Ovary (tissue), 10 donors: ENCODE measurements at regions of chr10 and their contacts with region 1.

Region 1: GRCh38 chr10:31947144-31947926 is 18.7 kb upstream of the ARHGAP12 start:
- DNase-seq: peak in 2 of 5 donors; percentile 15 to 52
- H3K4me3 ChIP-seq: no peak overlapping the region
- H3K27ac ChIP-seq: peak overlapping the region in 1 of 2 donors; percentile 2
- H3K4me1 ChIP-seq: peaks cover 5% of the 10 kb centered on the region
- H3K27me3 ChIP-seq: no peaks in the 10 kb centered on the region
- CTCF ChIP-seq: peak; percentile 43 to 52 (median 48)
- EP300 ChIP-seq: no peak
- POLR2A ChIP-seq: no peak

Region 2: DNA sequence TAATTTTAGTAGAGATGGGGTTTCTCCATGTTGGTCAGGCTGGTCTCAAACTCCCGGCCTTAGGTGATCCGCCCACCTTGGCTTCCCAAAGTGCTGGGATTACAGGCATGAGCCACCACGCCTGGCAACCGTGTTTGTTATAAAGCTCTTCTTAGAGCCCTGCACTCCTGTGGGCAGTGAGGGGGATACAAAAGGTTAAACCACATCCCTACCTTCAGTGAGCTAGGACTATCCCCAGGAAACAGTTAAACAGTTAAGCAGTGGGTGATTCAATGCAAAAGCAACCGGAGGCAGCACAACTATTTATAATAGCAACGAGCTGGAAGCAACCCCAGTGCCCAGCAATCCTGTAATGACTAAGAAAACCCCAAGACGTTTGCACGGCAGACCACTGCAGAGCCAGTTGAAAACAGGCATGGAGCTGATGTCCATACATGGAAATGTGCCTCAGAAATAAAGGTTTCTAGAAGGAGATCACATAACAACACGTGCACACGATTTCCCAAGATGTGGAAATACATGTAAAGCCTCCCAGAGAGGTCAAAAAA is 1210.6 kb before region 1 on chr10:
- intact Hi-C with region 1: loop called in 1 of 4 experiments (anchors 5 kb)
- DNase-seq: no peak
- H3K4me3 ChIP-seq: no peak overlapping the region
- H3K27ac ChIP-seq: no peak overlapping the region
- H3K4me1 ChIP-seq: no peaks in the 10 kb centered on the region
- H3K27me3 ChIP-seq: no peaks in the 10 kb centered on the region
- CTCF ChIP-seq: no peak
- EP300 ChIP-seq: no peak
- POLR2A ChIP-seq: no peak

Region 3: GRCh38 chr10:31864834-31865518 is 82.4 kb before region 1 on chr10:
- intact Hi-C with region 1: loop called in 2 of 4 experiments (anchors 10 kb)
- DNase-seq: no peak
- H3K4me3 ChIP-seq: no peak overlapping the region
- H3K27ac ChIP-seq: no peak overlapping the region
- H3K4me1 ChIP-seq: peaks cover 2% of the 10 kb centered on the region
- H3K27me3 ChIP-seq: no peaks in the 10 kb centered on the region
- CTCF ChIP-seq: no peak
- EP300 ChIP-seq: no peak
- POLR2A ChIP-seq: no peak

Region 4: DNA sequence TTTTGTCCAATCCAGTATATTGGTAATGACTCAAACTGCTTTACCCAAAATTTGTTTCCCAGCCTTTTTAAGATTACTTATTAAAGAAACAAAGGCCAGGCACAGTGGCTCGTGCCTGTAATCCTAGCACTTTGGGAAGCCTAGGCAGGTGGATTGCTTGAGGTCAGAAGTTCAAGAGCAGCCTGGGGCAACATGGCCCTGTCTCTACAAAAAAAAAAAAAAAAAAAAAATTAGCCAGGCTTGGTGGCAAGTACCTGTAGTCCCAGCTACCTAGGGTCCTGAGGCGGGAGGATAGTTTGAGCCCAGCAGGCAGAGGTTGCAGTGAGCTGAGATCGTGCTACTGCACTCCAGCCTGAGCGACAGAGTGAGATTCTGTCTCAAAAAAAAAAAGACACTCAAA is 11.7 kb before region 1 on chr10:
- intact Hi-C with region 1: loop called in 1 of 4 experiments (anchors 1 kb)
- DNase-seq: no peak
- H3K4me3 ChIP-seq: no peak overlapping the region
- H3K27ac ChIP-seq: no peak overlapping the region
- H3K4me1 ChIP-seq: no peaks in the 10 kb centered on the region
- H3K27me3 ChIP-seq: no peaks in the 10 kb centered on the region
- CTCF ChIP-seq: no peak
- EP300 ChIP-seq: no peak
- POLR2A ChIP-seq: no peak

Region 5: DNA sequence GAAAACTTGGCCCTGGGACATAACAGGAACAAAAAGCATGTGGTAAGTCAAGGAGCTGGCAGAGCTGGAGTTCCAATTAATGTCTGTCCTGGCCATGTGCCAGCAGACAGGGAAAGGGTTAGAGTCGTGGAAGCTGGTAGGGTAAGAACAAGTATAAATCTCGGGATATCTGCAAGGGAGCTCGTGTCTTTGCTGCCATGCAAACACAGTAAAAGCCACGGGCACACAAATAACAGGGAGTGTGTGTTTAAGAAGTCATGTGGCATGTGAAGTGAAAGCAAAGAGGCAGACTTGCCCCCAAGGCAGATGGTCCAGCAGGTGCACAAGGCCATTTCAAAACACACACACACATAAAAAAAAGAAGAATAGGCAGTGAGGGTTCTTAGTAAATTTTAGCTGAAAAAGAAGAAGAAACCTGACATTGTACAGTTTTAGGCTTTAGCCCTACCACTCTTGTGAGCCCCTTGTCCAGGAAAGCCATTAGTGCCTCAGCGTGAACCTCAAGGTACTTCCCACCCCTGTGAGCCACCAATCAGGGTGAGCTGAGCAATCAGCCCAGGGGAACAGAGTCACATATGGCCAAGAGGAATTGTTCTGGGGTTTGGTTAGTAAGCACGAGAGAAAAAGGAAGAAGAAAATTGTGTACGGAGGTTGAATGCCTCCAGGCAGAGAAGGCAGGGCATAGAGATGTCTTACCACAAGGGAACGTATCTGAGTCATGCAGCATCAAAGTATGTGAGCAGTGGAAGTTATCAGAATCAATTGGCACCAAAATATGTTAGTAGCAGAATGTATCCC is 14.1 kb after region 1 on chr10:
- intact Hi-C with region 1: no loop called
- DNase-seq: no peak
- H3K4me3 ChIP-seq: no peak overlapping the region
- H3K27ac ChIP-seq: no peak overlapping the region
- H3K4me1 ChIP-seq: peaks cover 1% of the 10 kb centered on the region
- H3K27me3 ChIP-seq: no peaks in the 10 kb centered on the region
- CTCF ChIP-seq: no peak
- EP300 ChIP-seq: no peak
- POLR2A ChIP-seq: no peak

Region 6: DNA sequence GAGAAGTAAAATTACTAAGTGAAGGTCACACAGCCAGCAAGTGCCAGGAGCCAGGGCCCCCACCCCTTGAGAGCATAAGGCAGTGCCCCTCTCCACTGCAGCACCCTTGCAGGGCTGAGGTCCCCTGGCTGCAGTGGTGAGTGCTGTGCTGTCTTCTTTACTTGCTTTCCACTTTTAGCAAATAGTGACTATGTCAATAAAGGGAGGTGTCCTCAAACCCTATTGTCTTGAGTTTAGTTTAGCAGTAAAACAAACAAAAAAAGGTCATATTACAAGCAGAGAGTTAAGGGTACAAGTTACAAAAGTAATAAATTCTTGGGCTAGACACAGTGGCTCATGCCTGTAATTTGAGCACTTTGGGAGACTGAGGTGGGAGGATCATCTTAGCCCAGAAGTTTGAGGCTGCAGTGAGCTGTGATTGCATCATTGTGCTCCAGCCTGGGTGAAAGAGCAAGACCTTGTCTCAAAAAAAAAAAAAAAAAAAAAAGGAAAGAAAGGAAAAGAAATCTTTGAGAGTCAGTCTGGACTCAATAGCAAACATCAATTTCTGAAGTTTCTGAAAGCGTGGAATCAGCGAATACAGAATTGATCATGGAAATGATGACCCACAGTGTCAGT is 147.9 kb after region 1 on chr10:
- intact Hi-C with region 1: no loop called
- DNase-seq: no peak
- H3K4me3 ChIP-seq: no peak overlapping the region
- H3K27ac ChIP-seq: no peak overlapping the region
- H3K4me1 ChIP-seq: no peaks in the 10 kb centered on the region
- H3K27me3 ChIP-seq: no peaks in the 10 kb centered on the region
- CTCF ChIP-seq: no peak
- EP300 ChIP-seq: no peak
- POLR2A ChIP-seq: no peak

Region 7: DNA sequence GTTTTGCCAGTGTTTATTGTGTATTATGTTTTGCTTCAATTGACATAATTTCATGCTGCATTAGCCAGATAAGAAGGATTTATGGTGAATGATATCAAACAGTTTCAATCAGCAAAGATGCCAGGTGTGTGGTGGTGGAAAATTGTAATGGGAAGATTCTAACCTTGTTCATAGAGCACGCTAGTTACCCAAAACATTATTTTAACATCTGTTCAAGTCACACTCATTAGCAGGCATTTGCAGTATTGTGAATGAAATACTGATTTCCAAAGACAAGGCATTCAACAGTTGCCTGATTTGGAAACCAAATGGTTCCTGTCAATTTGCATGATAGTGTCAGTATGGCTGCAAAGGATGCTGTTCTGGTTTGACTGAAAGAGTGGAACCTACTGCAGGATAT is 269.9 kb after region 1 on chr10:
- intact Hi-C with region 1: no loop called
- DNase-seq: no peak
- H3K4me3 ChIP-seq: no peak overlapping the region
- H3K27ac ChIP-seq: no peak overlapping the region
- H3K4me1 ChIP-seq: no peaks in the 10 kb centered on the region
- H3K27me3 ChIP-seq: no peaks in the 10 kb centered on the region
- CTCF ChIP-seq: no peak
- EP300 ChIP-seq: no peak
- POLR2A ChIP-seq: no peak

Region 8: DNA sequence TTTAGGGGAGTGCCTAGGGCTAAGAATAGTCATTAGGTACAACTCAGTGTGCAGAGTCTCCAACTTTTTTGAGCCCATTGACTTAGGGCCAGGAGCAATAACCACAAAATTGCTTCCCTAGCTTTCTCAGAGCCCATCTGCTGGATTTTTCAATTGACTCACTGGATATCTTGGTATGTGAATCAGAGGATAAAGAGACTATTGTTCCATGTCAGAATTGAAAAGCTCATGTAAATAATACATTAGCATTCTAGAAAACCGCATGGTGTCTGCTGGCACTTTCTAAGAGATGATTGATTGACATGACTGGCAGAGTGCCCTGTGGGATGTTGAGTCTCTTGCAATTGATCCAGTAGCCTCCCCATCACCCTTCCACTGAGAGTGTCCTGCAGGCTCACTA is 744.8 kb after region 1 on chr10:
- intact Hi-C with region 1: no loop called
- DNase-seq: no peak
- H3K4me3 ChIP-seq: no peak overlapping the region
- H3K27ac ChIP-seq: no peak overlapping the region
- H3K4me1 ChIP-seq: no peaks in the 10 kb centered on the region
- H3K27me3 ChIP-seq: no peaks in the 10 kb centered on the region
- CTCF ChIP-seq: no peak
- EP300 ChIP-seq: no peak
- POLR2A ChIP-seq: no peak